MCF 10A (cell line): ENCODE measurements at regions of chr4 and their contacts with region 1.

Region 1: GRCh38 chr4:109826719-109827118 is 1.1 kb upstream of the RRH start:
- DNase-seq: peak; percentile 20
- H3K4me3 Mint-ChIP-seq: no peak overlapping the region
- H3K27ac Mint-ChIP-seq: no peak overlapping the region
- H3K4me1 Mint-ChIP-seq: no peaks in the 10 kb centered on the region
- H3K27me3 Mint-ChIP-seq: no peaks in the 10 kb centered on the region
- CTCF ChIP-seq: peak; percentile 38

Region 2: GRCh38 chr4:109251396-109251795 is 575.3 kb before region 1 on chr4:
- CTCF ChIA-PET with region 1: no interaction called
- POLR2A ChIA-PET with region 1: no interaction called
- intact Hi-C with region 1: no loop called
- DNase-seq: no peak
- H3K4me3 Mint-ChIP-seq: no peak overlapping the region
- H3K27ac Mint-ChIP-seq: no peak overlapping the region
- H3K4me1 Mint-ChIP-seq: no peaks in the 10 kb centered on the region
- H3K27me3 Mint-ChIP-seq: no peaks in the 10 kb centered on the region
- CTCF ChIP-seq: no peak

Region 3: GRCh38 chr4:109815151-109816081 is 11.3 kb before region 1 on chr4 and contains the start of gene GAR1:
- CTCF ChIA-PET with region 1: interaction called, 19 read pairs
- POLR2A ChIA-PET with region 1: no interaction called
- intact Hi-C with region 1: no loop called
- DNase-seq: peak; percentile 94
- H3K4me3 Mint-ChIP-seq: peak within 1 kb of the TSS; percentile 96
- H3K27ac Mint-ChIP-seq: peak within 1 kb of the TSS; percentile 99
- H3K4me1 Mint-ChIP-seq: peaks cover 28% of the 10 kb centered on the region
- H3K27me3 Mint-ChIP-seq: no peaks in the 10 kb centered on the region
- CTCF ChIP-seq: no peak
- total RNA-seq, gene GAR1: 21.2 and 28.7 TPM in 2 replicates

Region 4: DNA sequence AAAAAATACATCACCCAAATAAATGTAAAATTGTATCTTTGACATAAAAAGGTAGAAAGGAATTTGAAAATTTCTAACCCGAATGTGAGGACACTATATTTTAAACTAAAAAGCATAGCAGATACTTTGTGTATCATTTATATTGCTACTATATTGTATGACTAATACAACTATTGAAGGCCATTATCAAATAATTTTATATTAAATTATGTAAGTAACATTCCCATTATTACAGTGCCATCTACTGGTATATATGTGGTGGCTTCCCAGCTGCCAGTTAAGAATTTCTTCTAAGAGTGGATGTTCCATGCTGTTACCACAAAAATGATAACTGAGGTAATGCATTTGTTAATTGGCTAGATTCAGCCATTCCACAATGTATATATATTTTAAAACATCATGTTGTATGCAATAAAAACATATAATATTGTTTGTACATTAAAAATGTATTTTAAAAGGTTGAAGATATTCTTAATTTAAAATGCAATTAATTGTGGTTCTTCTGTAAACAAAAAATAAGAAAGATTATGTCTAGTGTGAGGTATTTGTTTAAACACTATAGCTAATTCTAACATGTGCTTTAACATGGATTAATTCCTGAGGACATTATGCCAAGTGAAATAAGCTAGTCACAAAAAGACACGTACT is 151.3 kb after region 1 on chr4:
- CTCF ChIA-PET with region 1: interaction called, 10 read pairs
- POLR2A ChIA-PET with region 1: interaction called, 3 read pairs
- intact Hi-C with region 1: loop called (anchors 1 kb)
- DNase-seq: peak; percentile 47
- H3K4me3 Mint-ChIP-seq: no peak overlapping the region
- H3K27ac Mint-ChIP-seq: no peak overlapping the region
- H3K4me1 Mint-ChIP-seq: no peaks in the 10 kb centered on the region
- H3K27me3 Mint-ChIP-seq: no peaks in the 10 kb centered on the region
- CTCF ChIP-seq: peak; percentile 60